B cell (primary cell): ENCODE measurements at regions of chr16 and their contacts with region 1.

Region 1: DNA sequence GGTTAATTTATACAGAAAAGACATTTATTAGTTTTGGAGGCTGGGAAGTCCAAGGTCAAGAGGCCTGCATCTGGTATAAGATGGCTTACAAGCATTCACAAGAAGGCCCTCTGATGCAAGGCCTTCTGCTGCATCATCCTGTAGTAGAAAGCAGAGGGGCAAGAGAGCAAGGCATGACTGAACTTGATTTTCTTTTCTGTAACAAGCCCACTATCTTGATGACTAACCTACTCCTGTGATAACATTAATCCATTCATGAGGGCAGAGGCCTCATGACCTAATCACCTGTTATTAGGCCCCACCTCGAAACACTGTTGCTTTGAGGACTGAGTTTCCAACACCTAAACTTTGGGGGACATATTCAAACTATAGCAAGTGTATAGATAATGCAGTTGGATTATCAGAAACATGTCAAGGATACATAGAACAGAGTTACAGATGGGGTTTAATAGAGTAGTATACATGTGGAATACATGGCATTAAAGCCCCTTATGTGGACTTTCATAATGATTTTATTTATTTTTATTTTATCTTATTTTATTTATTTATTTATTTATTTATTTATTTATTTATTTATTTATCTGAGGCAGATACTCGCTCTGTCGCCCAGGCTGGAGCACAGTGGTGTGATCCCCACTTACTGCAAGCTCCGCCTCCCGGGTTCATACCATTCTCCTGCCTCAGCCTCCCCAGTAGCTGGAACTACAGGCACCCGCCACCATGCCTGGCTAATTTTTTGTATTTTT is 88.2 kb downstream of the CHD9 start:
- DNase-seq: no peak
- ATAC-seq: no peak
- H3K4me3 ChIP-seq: no peak overlapping the region
- H3K4me3 Mint-ChIP-seq: no peak overlapping the region
- H3K27ac ChIP-seq: no peak overlapping the region
- H3K27ac Mint-ChIP-seq: no peak overlapping the region
- H3K4me1 ChIP-seq: peaks cover 4 to 6% of the 10 kb centered on the region in 2 donors
- H3K4me1 Mint-ChIP-seq: peaks cover 23% of the 10 kb centered on the region
- H3K27me3 ChIP-seq: no peaks in the 10 kb centered on the region
- H3K27me3 Mint-ChIP-seq: no peaks in the 10 kb centered on the region
- CTCF ChIP-seq: no peak

Region 2: DNA sequence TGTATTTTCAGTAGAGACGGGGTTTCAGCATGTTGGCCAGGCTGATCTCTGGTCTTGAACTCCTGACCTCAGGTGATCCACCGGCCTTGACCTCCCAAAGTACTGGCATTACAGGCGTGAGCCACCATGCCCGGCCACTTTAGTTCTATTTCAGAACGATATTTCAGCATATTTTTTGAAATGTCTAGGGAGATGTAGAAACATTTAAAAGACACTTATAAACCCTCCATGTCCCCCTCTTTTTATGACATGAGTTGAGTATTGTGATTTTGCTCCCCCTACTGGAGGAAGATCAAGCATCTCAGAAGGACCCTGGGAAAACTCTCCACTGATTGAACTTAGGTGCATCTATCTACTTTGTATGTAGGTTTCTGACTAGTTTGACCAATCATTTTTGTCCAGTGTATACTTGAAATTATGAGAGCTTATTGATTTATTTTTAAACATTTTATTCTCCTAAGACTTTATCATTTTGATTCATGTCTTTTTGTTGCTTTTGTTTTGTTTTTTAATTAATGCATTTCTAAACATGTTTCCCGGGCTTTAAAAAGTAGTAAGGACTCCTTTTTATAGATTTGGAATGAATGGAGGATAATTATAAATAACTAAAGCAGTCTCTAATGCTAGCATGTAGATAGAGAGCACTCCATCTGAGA is 16.9 kb after region 1 on chr16:
- CTCF ChIA-PET with region 1: interaction called, 10 read pairs
- POLR2A ChIA-PET with region 1: no interaction called
- intact Hi-C with region 1: no loop called
- DNase-seq: peak; percentile 77
- ATAC-seq: peak; percentile 77
- H3K4me3 ChIP-seq: no peak overlapping the region
- H3K4me3 Mint-ChIP-seq: no peak overlapping the region
- H3K27ac ChIP-seq: no peak overlapping the region
- H3K27ac Mint-ChIP-seq: no peak overlapping the region
- H3K4me1 ChIP-seq: no peaks in the 10 kb centered on the region
- H3K4me1 Mint-ChIP-seq: no peaks in the 10 kb centered on the region
- H3K27me3 ChIP-seq: no peaks in the 10 kb centered on the region
- H3K27me3 Mint-ChIP-seq: no peaks in the 10 kb centered on the region
- CTCF ChIP-seq: peak; percentile 85